ENCODE measurements at regions of chr13 and their contacts with region 1.

Region 1: GRCh38 chr13:40522282-40522681 is 144.2 kb downstream of the FOXO1 start:
- DNase-seq: no peak
- H3K4me3 ChIP-seq: no peak overlapping the region
- CTCF ChIP-seq: no peak
- POLR2A ChIP-seq: no peak

Region 2: DNA sequence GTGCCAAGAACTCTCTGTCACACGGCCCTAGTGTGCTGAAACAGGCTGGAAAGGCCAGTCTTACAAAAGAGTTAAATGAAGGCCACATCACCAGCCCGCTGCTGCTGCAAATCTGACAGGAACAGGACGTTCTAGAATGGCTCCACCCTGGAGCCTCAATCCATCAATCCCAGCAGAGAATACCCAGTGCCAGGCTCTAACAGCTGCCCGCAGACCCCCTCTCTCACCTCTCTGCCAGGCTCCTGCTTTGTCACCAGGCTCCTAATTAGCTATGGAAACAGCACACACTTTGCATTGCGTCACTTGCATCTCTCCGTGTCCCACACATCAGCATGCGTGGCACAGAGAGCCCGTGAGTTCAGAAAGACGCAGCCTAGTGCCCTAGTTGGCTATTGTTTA is 169.9 kb before region 1 on chr13:
- intact Hi-C with region 1: no loop called
- DNase-seq: peak in 1 of 2 donors; percentile 68
- H3K4me3 ChIP-seq: no peak overlapping the region
- CTCF ChIP-seq: no peak
- POLR2A ChIP-seq: no peak

Region 3: DNA sequence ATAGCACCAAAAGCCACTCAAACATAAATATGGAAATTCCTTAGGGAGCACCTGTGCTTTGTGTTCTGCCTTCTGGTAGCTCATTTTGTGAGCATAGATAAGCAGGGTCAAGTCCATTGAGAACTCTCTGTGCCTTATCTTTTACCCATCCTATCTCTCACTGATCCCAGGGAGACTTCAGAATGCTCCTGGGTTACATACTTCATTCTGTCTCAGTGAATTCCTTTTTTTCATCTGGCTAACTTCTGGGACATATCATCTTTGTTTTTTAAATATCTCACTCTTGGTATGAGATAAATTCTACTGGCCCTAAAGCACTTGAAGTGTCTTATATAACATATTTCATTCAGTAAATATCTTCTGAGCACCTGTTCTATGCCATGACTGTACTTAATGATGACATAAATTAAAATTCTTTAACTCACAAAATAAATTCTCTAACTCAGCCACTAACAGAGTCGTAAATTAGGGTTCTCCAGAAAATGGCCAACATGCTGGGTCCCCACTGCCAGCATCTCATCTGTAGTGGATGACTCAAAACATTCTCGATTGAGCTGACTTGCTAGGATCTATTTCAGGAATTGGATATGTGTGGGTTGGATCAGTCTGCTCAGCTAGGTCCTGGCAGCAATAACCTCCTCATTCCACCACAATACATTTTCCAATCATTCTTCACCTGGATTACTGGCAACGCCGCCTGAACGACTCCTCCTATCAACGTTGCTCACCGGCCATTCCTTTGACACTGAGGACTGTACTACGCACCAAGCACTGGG is 26.1 kb before region 1 on chr13:
- intact Hi-C with region 1: loop called (anchors 2 kb)
- DNase-seq: no peak
- H3K4me3 ChIP-seq: no peak overlapping the region
- CTCF ChIP-seq: no peak
- POLR2A ChIP-seq: no peak

Measured in lower leg skin (tissue), 4 donors.